Gastrocnemius medialis (tissue), 4 donors: ENCODE measurements at regions of chr2 and their contacts with region 1.

Region 1: GRCh38 chr2:237858294-237859081 is 935 bp upstream of the RAMP1 start:
- DNase-seq: peak; percentile 56 to 81
- ATAC-seq: peak; percentile 83 to 89
- H3K4me3 ChIP-seq: peak overlapping the region in 3 of 4 donors; percentile 15 to 62 (median 59)
- H3K27ac ChIP-seq: peak overlapping the region; percentile 79 to 92 (median 86)
- H3K4me1 ChIP-seq: peaks cover 13 to 39% of the 10 kb centered on the region in 2 donors
- H3K27me3 ChIP-seq: no peaks in the 10 kb centered on the region
- CTCF ChIP-seq: peak; percentile 73 to 90 (median 80)
- POLR2A ChIP-seq: peak in 1 of 2 donors; percentile 52

Region 2: DNA sequence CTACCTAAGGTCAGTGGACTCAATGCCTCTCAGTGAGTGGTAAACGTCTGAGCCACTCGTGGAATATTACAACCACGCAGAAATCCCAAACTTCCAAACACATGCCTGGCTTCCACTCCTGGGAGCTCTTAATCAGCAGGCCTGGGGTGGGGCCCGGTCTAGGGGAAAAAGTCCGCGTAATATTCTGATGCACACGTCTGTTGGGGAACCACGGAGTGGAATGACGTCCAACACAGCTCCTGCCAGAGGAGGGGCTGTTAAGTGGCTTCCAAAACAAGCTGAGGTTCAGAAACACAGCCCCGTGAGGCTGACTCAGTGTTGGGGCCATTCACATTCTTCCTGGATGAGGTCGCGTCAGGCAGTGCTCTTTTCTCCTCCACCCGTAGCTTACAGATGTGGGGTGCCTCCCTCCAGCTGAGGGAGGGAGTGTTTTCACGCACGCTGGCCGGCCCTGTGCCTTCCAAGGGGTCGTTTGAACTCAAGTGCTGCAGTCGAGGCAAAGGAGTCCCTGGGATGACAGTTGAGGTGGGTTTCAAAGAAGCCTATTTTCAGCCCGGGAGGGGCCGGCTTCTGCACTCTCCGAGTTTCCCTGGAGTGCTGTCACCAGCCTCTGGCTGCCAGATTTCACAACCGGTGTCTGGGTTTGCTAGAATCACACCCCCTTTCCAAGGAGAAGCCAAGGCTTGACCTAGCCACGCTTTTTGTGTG is 1215.8 kb before region 1 on chr2:
- in situ Hi-C with region 1: no loop called
- intact Hi-C with region 1: no loop called
- DNase-seq: peak; percentile 78 to 91
- ATAC-seq: peak; percentile 85
- H3K4me3 ChIP-seq: no peak overlapping the region
- H3K27ac ChIP-seq: peak overlapping the region; percentile 58 to 71 (median 66)
- H3K4me1 ChIP-seq: no peaks in the 10 kb centered on the region
- H3K27me3 ChIP-seq: peaks cover 0 to 3% (median 0%) of the 10 kb centered on the region in 3 donors
- CTCF ChIP-seq: no peak
- POLR2A ChIP-seq: peak in 1 of 2 donors; percentile 2

Region 3: DNA sequence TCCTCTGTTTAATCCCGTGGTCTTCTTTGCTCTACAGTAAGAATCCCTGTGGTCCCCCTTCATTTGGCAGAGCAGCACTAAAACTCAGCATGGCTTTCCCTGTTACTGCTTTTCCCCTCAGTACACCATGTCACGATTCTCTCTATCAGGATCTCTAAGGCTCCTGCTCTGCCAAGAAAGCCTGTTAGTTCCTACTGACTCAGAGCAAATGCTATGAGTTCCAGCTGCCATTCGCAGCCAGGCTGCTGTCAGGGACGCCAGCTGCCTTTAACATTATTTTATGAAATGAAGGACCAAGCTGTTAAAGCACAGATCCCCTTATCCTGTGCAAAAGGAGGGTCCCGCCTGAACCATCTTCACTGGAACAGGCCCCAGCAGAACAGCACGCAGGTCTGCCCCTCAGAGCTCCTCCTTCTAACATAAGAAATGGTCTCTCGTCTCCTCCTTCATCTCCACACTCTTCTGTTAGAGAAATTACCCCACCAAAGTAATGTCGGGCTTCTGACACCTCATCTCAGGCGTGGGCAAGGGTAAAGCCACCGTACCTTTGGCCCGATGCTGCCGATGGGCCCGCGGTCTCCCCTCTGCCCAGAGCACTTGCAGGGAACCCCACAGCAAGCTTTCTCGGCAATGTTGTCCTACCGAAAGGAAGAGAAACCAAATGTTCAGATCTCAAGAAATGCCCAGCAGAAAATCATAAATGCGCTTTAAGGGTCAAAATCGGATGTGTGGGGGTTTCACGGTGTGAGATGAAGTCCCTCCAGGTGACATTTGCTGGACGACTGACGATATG is 497.1 kb before region 1 on chr2:
- in situ Hi-C with region 1: no loop called
- intact Hi-C with region 1: no loop called
- DNase-seq: no peak
- ATAC-seq: peak in 1 of 2 donors; percentile 36
- H3K4me3 ChIP-seq: no peak overlapping the region
- H3K27ac ChIP-seq: peak overlapping the region in 2 of 4 donors; percentile 14 to 26
- H3K4me1 ChIP-seq: no peaks in the 10 kb centered on the region
- H3K27me3 ChIP-seq: no peaks in the 10 kb centered on the region
- CTCF ChIP-seq: no peak
- POLR2A ChIP-seq: no peak

Region 4: DNA sequence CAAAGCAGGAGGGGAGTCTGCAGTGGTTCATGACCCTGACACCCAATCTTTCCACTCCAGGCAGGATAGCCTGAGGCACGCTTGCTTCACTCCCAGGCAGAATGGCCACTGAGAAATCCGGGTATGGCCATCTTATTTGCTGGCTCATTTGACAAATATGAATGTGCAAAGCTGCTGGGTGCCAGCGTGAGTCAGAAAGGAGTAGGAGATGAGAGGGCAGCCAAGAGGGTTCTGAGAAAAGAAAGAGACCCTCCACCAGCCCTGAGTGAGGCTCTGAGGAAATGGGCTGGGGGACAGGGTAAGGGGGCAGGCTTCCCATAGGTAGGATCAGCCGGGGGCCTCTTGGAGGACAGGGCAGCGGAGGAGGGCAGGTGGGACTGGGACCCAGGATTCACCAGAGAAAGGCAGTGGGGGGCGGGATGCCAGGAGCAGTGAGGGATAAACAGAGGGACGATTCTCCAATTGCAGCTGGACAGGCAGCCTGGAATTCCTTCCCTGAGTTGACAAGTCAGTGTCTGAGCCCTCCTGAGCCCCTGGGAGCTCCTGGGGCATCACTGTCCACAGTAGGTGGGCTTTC is 16.2 kb after region 1 on chr2:
- in situ Hi-C with region 1: no loop called
- intact Hi-C with region 1: no loop called
- DNase-seq: no peak
- ATAC-seq: peak; percentile 46 to 62
- H3K4me3 ChIP-seq: no peak overlapping the region
- H3K27ac ChIP-seq: peak overlapping the region; percentile 1 to 62 (median 42)
- H3K4me1 ChIP-seq: peaks cover 32 to 34% of the 10 kb centered on the region in 2 donors
- H3K27me3 ChIP-seq: no peaks in the 10 kb centered on the region
- CTCF ChIP-seq: no peak
- POLR2A ChIP-seq: no peak

Region 5: GRCh38 chr2:237886685-237887481 is 28.4 kb after region 1 on chr2:
- in situ Hi-C with region 1: no loop called
- intact Hi-C with region 1: loop called (anchors 1 kb)
- DNase-seq: peak in 1 of 2 donors; percentile 86
- ATAC-seq: peak; percentile 61 to 82
- H3K4me3 ChIP-seq: peak overlapping the region in 1 of 4 donors; percentile 8
- H3K27ac ChIP-seq: peak overlapping the region; percentile 72 to 96 (median 86)
- H3K4me1 ChIP-seq: peaks cover 9 to 30% of the 10 kb centered on the region in 2 donors
- H3K27me3 ChIP-seq: no peaks in the 10 kb centered on the region
- CTCF ChIP-seq: no peak
- POLR2A ChIP-seq: peak in 1 of 2 donors; percentile 30

Region 6: DNA sequence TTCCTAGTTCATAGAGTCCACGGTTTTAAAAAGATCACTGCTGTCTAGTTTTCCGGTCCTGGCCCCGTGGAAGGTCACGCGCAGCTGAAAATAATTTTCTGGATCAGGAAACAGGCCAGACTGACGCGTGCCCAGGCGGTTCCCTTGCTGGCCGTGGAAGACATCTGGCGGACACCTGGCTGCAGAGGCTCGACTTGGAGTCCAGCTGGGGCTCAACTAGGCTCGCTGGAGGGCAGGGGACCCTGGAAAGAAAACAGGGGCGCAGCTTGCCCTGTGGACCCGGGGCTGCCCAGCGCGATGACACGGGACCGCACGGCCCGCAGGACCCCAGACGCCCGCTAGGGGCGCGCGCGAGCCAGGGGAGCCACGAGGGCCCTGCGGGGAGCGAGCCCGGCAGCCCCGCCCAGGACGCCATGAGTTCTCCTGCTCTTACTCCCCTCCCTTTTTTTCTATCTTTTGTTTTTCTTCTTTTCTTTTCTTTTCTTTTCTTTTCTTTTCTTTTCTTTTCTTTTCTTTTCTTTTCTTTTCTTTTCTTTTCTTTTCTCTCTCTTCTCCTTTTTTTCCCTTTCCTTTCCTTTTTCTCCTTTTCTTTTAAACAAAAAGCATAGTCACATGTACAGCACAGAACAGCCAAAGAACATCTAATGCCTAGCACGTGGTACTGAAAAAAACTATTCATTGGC is 65.1 kb after region 1 on chr2:
- in situ Hi-C with region 1: loop called in 2 of 4 experiments (anchors 5 to 10 kb)
- intact Hi-C with region 1: loop called (anchors 1 kb)
- DNase-seq: peak; percentile 44 to 71
- ATAC-seq: peak; percentile 83 to 94
- H3K4me3 ChIP-seq: peak overlapping the region; percentile 27 to 54 (median 42)
- H3K27ac ChIP-seq: peak overlapping the region; percentile 36 to 67 (median 62)
- H3K4me1 ChIP-seq: peaks cover 4 to 16% of the 10 kb centered on the region in 2 donors
- H3K27me3 ChIP-seq: no peaks in the 10 kb centered on the region
- CTCF ChIP-seq: peak; percentile 94 to 99 (median 99)
- POLR2A ChIP-seq: no peak

Region 7: GRCh38 chr2:238015705-238016104 is 157.2 kb after region 1 on chr2:
- in situ Hi-C with region 1: no loop called
- intact Hi-C with region 1: loop called (anchors 1 kb)
- DNase-seq: no peak
- ATAC-seq: no peak
- H3K4me3 ChIP-seq: no peak overlapping the region
- H3K27ac ChIP-seq: no peak overlapping the region
- H3K4me1 ChIP-seq: no peaks in the 10 kb centered on the region
- H3K27me3 ChIP-seq: no peaks in the 10 kb centered on the region
- CTCF ChIP-seq: peak in 2 of 5 experiments; percentile 8 to 31
- POLR2A ChIP-seq: no peak

Region 8: GRCh38 chr2:238139196-238140039 is 280.9 kb after region 1 on chr2:
- in situ Hi-C with region 1: no loop called
- intact Hi-C with region 1: loop called (anchors 2 kb)
- DNase-seq: peak; percentile 38 to 65
- ATAC-seq: peak; percentile 3
- H3K4me3 ChIP-seq: peak overlapping the region; percentile 56 to 89 (median 80)
- H3K27ac ChIP-seq: peak overlapping the region; percentile 91 to 100 (median 98)
- H3K4me1 ChIP-seq: peaks cover 67 to 72% of the 10 kb centered on the region in 2 donors
- H3K27me3 ChIP-seq: no peaks in the 10 kb centered on the region
- CTCF ChIP-seq: peak; percentile 51 to 96 (median 89)
- POLR2A ChIP-seq: no peak

Region 9: DNA sequence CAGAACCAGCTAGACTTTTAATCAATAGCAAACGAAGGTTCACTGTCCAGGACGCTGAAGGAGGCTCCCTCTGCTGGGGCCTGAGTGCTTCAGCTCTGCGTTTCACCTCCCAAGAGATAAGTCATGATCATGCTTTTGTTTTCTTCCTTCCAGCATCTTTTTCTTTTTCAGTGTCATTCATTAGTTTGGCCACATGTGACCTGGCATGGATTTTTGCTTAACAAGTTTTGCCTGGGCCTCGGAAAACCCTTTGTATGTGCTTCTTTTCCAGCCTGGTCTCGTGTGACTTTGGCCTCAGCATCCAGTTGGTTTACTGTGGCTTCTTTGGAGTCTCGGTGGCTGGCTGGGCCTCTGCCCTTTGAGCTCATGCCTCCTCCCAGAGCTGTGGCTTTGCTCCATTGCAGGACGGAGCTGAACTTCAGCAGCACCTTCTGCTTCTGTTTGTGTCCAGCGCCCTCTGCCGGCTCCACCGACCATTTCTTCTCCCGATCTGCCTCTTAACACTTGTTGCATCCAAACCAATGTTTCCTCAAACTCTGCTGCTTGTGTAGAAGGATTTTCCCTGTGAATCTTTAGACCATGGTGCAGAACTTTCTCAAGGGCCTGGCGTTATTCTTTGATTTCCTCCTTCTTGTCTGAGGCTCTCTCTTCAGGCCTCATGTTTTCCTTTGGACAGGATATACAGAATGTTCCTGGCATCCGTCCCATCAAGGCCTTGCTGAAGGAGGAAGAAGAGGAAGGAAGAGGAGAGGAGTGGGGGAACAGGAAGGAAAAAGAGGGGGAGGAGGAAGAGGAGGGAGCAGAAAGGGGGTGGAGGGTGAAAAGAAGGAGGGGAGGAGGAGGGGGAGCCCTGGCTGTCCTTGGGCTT is 404.9 kb after region 1 on chr2:
- in situ Hi-C with region 1: loop called in 3 of 4 experiments (anchors 10 to 25 kb)
- intact Hi-C with region 1: loop called (anchors 5 kb)
- DNase-seq: peak; percentile 86 to 93
- ATAC-seq: peak; percentile 93
- H3K4me3 ChIP-seq: no peak overlapping the region
- H3K27ac ChIP-seq: peak overlapping the region; percentile 55 to 70 (median 58)
- H3K4me1 ChIP-seq: peaks cover 16 to 18% of the 10 kb centered on the region in 2 donors
- H3K27me3 ChIP-seq: no peaks in the 10 kb centered on the region
- CTCF ChIP-seq: peak; percentile 76 to 88 (median 86)
- POLR2A ChIP-seq: no peak